ENCODE measurements at regions of chr6 and their contacts with region 1.

Region 1: GRCh38 chr6:112188906-112189305 is 65.5 kb downstream of the LAMA4 start:
- DNase-seq: peak in 3 of 5 donors; percentile 42 to 80 (median 79)
- H3K4me3 ChIP-seq: peak overlapping the region in 1 of 3 donors; percentile 18
- H3K27ac ChIP-seq: peak overlapping the region in 1 of 2 donors; percentile 1
- H3K4me1 ChIP-seq: peaks cover 7 to 11% (median 11%) of the 10 kb centered on the region in 3 donors
- H3K27me3 ChIP-seq: no peaks in the 10 kb centered on the region
- CTCF ChIP-seq: no peak

Region 2: DNA sequence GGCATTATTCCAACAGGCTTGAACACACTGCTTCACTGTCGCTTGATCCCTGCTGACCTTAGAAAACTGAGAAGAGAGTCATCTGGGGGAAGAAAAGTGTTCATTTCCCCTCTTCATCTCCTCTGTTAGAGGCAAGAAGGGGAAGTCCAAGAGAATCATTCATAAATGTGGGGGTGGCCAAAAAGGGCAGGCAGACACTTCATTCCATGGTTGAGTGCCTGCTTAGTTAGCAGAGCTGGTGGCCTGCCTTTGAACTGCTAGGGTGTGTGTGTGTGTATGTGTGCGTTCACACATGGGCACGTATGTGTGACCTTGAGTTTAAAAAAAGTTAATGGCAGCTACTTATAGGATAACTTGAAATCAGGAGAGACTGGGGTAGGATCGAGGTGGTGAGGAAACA is 118.8 kb after region 1 on chr6:
- intact Hi-C with region 1: loop called (anchors 5 kb)
- DNase-seq: peak in 4 of 5 donors; percentile 88 to 95 (median 92)
- H3K4me3 ChIP-seq: no peak overlapping the region
- H3K27ac ChIP-seq: no peak overlapping the region
- H3K4me1 ChIP-seq: peaks cover 0 to 3% (median 0%) of the 10 kb centered on the region in 3 donors
- H3K27me3 ChIP-seq: no peaks in the 10 kb centered on the region
- CTCF ChIP-seq: no peak

Region 3: GRCh38 chr6:112343390-112343789 is 154.5 kb after region 1 on chr6:
- intact Hi-C with region 1: no loop called
- DNase-seq: no peak
- H3K4me3 ChIP-seq: no peak overlapping the region
- H3K27ac ChIP-seq: no peak overlapping the region
- H3K4me1 ChIP-seq: no peaks in the 10 kb centered on the region
- H3K27me3 ChIP-seq: no peaks in the 10 kb centered on the region
- CTCF ChIP-seq: no peak

Region 4: GRCh38 chr6:112743323-112743722 is 554.4 kb after region 1 on chr6:
- intact Hi-C with region 1: no loop called
- DNase-seq: no peak
- H3K4me3 ChIP-seq: no peak overlapping the region
- H3K27ac ChIP-seq: no peak overlapping the region
- H3K4me1 ChIP-seq: no peaks in the 10 kb centered on the region
- H3K27me3 ChIP-seq: no peaks in the 10 kb centered on the region
- CTCF ChIP-seq: no peak